HEK293 (cell line): ENCODE measurements at regions of chr4 and their contacts with region 1.

Region 1: GRCh38 chr4:138090150-138090917 is 151.8 kb downstream of the SLC7A11 start:
- H3K4me3 ChIP-seq: peak overlapping the region; percentile 18
- H3K27ac ChIP-seq: no peak overlapping the region
- H3K4me1 ChIP-seq: no peaks in the 10 kb centered on the region
- CTCF ChIP-seq: no peak; the same call in 1 of the 2 replicates

Region 2: DNA sequence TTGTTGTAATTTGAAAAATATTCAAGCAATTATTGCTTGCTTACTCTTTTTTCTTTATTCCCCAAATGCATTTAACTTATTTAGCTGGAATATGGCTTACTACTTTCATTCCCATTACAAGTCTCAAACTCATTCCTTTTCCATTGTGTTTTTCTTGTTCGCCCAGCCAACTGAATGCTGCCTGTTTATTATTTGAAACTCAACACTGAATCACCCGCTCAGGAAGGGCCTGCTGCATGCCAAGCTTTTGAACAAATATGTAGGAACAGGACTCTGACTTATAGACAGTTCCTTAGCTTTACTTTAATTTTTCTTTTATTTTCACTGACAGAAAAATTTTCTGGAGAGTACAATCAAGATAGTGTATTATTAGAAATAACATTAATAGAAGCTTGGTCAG is 570.9 kb before region 1 on chr4:
- CTCF ChIA-PET with region 1: no interaction called
- POLR2A ChIA-PET with region 1: no interaction called
- H3K4me3 ChIP-seq: no peak overlapping the region
- H3K27ac ChIP-seq: no peak overlapping the region
- H3K4me1 ChIP-seq: no peaks in the 10 kb centered on the region
- CTCF ChIP-seq: no peak

Region 3: DNA sequence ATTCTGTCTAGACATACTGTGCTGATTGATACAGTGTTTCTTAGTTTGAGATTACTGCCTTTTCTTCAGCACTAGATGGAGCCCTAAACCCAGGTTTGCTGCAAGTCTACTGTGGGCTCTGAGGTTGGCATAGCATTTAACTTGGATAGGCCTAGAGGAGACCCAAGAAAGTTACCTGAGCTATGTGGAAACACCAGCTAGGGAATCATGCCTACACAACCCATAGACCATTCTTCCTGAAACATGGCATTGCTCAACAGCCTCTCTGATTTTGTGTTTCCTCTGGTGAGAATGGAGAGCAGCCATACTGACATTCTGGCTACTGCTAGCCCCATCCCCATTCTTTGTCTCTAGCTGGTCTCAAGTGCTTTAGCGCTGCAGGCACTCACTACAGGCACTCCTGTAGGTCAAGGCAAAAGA is 270.4 kb before region 1 on chr4:
- CTCF ChIA-PET with region 1: interaction called, 12 read pairs
- POLR2A ChIA-PET with region 1: no interaction called
- H3K4me3 ChIP-seq: no peak overlapping the region
- H3K27ac ChIP-seq: no peak overlapping the region
- H3K4me1 ChIP-seq: no peaks in the 10 kb centered on the region
- CTCF ChIP-seq: 0 out of 2 replicates have a peak, but pooled peaks have one; percentile 21

Region 4: DNA sequence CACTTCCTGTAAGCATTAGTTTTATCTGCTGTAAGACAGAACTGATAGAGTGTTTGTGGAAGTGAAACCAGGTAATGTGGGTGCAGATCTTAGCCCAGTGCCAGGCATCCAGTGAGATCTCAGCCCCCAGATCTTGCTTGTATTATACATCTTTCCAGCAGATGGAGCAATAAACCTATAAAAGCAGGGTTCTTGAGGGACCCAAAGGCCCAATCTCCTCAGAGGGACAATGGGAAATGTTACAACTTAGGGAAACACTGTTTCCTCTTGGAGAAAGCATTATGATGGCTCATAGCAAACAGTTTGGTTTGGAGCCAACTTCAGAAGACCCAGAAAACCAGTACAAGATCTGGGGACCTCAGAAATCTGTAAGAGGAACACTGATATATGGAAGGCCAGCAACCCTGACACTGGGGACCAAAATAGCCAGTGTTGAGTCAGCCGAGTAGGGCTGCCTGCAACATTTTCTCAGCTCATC is 54.5 kb before region 1 on chr4:
- CTCF ChIA-PET with region 1: interaction called, 26 read pairs
- POLR2A ChIA-PET with region 1: no interaction called
- H3K4me3 ChIP-seq: no peak overlapping the region
- H3K27ac ChIP-seq: no peak overlapping the region
- H3K4me1 ChIP-seq: no peaks in the 10 kb centered on the region
- CTCF ChIP-seq: no peak

Region 5: DNA sequence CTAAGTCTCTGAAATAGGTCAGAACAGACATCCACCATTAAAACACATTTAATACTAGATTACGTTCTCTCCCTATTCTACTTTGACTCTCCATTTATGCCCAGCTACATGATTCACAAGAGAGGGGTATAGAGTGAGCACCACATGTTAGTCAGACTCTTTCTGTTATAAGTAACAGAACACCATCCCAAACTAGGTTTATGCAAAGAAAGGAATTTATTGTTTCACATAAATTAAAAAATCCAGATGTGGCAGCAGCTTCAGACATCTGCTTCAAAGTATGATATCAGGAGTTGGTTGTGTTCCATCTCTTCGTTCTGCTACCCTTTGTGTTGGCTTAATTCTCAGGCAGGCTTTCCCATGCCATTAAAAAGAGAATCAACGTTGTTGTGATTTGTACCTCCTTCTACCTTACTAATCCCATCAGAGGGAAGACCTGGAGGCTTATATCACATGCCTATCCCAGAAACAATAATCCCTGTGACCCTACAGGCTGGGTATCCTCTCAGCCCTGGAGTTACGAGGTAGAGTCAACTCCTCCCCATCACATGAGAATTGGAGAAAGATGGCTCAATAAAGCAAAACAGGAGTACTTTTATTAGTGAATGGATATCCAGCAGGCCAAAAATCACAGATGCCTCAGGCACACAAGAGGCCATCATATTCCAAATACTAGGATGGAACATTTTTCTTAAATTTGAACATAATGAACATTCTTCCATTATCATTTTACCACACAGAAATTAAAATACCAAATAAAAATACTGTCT is 11.4 kb before region 1 on chr4:
- CTCF ChIA-PET with region 1: interaction called, 13 read pairs
- POLR2A ChIA-PET with region 1: no interaction called
- H3K4me3 ChIP-seq: no peak overlapping the region
- H3K27ac ChIP-seq: no peak overlapping the region
- H3K4me1 ChIP-seq: no peaks in the 10 kb centered on the region
- CTCF ChIP-seq: no peak

Region 6: DNA sequence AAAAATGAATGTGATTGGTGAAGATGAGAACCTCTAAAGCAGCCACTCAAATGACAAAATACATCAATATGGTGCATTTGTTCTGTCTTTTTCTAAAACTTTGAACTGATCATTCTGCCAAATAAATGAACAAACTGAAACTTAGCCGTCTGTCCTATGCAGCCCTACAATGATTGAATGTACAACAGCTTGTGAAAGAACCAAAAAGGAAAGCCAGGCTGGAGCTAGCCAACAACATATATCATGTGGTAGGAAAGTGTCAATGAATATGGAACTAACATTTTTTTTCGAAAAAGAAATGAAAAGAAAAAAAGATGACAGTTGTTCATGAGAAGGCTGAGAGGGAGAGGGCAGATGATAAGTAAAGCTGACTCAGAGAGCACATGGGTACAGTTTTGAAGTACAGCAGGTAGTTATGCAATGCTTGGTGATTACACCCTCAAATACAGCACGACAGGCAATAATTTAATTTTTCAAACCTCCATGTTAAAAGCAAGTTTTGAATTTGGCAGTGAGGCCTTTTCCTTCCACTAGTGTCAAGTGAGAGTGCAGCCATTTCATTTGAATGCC is 173.0 kb after region 1 on chr4:
- CTCF ChIA-PET with region 1: no interaction called
- POLR2A ChIA-PET with region 1: no interaction called
- H3K4me3 ChIP-seq: no peak overlapping the region
- H3K27ac ChIP-seq: no peak overlapping the region
- H3K4me1 ChIP-seq: no peaks in the 10 kb centered on the region
- CTCF ChIP-seq: no peak